Aorta (tissue), 5 donors: ENCODE measurements at regions of chr1 and their contacts with region 1.

Region 1: GRCh38 chr1:36149237-36149972 is at the start of gene TRAPPC3:
- DNase-seq: peak; percentile 100
- ATAC-seq: peak; percentile 96
- H3K4me3 ChIP-seq: peak within 1 kb of the TSS; percentile 23 to 48
- H3K27ac ChIP-seq: peak within 1 kb of the TSS; percentile 80 to 99
- H3K4me1 ChIP-seq: no peaks in the 10 kb centered on the region
- H3K27me3 ChIP-seq: no peaks in the 10 kb centered on the region
- total RNA-seq, gene TRAPPC3: 55.6 to 61.7 TPM

Region 2: DNA sequence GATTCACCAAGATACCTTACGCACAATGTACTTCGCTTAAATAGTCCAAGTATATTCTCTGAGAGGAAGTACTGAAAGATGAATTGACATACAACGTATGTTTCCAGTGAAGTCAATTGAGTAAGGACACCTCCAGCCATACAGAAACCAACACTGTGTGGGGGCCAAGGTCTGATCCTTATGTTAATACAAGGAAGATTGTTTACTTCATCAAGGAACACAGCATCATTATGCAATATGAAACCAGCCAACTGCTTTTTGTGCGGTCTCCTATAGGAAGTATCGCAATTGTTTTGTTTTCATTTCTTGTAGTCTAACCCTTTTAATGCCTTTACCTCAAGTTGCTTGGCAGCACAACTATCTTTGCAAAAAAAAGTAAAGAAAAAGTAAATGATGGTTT is 93.7 kb before region 1 on chr1:
- intact Hi-C with region 1: no loop called
- DNase-seq: no peak
- ATAC-seq: no peak
- H3K4me3 ChIP-seq: no peak overlapping the region
- H3K27ac ChIP-seq: no peak overlapping the region
- H3K4me1 ChIP-seq: no peaks in the 10 kb centered on the region
- H3K27me3 ChIP-seq: no peaks in the 10 kb centered on the region

Region 3: GRCh38 chr1:36187800-36188593 is 38.6 kb after region 1 on chr1:
- intact Hi-C with region 1: loop called (anchors 1 to 5 kb)
- DNase-seq: peak; percentile 91 to 92
- ATAC-seq: peak; percentile 95
- H3K4me3 ChIP-seq: no peak overlapping the region
- H3K27ac ChIP-seq: peak overlapping the region in 1 of 2 donors; percentile 87
- H3K4me1 ChIP-seq: no peaks in the 10 kb centered on the region
- H3K27me3 ChIP-seq: no peaks in the 10 kb centered on the region

Region 4: GRCh38 chr1:36223993-36224536 is 74.7 kb after region 1 on chr1 and contains the start of gene THRAP3:
- intact Hi-C with region 1: loop called in 1 of 2 experiments (anchors 2 kb)
- DNase-seq: peak; percentile 100
- ATAC-seq: peak; percentile 99
- H3K4me3 ChIP-seq: peak within 1 kb of the TSS; percentile 63 to 69
- H3K27ac ChIP-seq: peak within 1 kb of the TSS; percentile 64 to 90
- H3K4me1 ChIP-seq: peaks cover 0 to 2% of the 10 kb centered on the region in 2 donors
- H3K27me3 ChIP-seq: no peaks in the 10 kb centered on the region
- total RNA-seq, gene THRAP3: 85.3 to 91.5 TPM

Region 5: GRCh38 chr1:36248250-36248894 is 99.0 kb after region 1 on chr1:
- intact Hi-C with region 1: no loop called
- DNase-seq: peak; percentile 81 to 82
- ATAC-seq: peak; percentile 91
- H3K4me3 ChIP-seq: no peak overlapping the region
- H3K27ac ChIP-seq: peak overlapping the region; percentile 70 to 76
- H3K4me1 ChIP-seq: peaks cover 0 to 8% of the 10 kb centered on the region in 2 donors
- H3K27me3 ChIP-seq: no peaks in the 10 kb centered on the region

Region 6: DNA sequence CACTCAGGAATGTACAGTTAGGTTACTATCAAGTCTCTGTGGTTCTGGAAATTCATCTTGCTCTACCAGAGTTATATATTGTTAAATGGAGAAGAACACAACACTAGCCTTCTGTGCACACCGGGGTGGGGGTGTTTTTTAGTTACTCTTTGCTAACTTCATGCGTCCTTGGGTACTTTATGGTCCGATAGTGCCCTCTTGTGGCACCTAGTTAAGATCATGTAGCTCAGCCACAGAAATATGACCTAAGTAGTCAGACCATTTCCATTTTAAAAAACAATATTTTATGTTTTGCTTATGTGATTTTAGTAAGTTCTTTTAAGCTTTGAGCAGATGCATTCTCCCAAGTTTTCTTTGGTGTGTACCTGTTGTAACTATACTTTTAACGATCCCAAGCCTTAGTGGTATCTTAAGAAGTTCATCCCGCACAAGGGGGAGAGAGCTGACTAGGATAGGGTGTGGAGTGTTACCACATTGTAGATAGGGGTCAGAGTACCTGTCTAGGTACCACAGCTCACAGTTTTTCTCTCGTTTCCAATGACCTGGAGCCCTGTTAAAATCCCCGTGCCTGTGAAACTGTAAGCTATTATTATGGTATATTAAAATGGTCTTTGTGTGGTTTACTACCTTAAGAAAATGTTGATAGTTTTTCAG is 136.2 kb after region 1 on chr1:
- intact Hi-C with region 1: loop called (anchors 2 to 5 kb)
- DNase-seq: peak in 1 of 2 donors; percentile 59
- ATAC-seq: peak; percentile 88
- H3K4me3 ChIP-seq: no peak overlapping the region
- H3K27ac ChIP-seq: no peak overlapping the region
- H3K4me1 ChIP-seq: no peaks in the 10 kb centered on the region
- H3K27me3 ChIP-seq: no peaks in the 10 kb centered on the region

Region 7: DNA sequence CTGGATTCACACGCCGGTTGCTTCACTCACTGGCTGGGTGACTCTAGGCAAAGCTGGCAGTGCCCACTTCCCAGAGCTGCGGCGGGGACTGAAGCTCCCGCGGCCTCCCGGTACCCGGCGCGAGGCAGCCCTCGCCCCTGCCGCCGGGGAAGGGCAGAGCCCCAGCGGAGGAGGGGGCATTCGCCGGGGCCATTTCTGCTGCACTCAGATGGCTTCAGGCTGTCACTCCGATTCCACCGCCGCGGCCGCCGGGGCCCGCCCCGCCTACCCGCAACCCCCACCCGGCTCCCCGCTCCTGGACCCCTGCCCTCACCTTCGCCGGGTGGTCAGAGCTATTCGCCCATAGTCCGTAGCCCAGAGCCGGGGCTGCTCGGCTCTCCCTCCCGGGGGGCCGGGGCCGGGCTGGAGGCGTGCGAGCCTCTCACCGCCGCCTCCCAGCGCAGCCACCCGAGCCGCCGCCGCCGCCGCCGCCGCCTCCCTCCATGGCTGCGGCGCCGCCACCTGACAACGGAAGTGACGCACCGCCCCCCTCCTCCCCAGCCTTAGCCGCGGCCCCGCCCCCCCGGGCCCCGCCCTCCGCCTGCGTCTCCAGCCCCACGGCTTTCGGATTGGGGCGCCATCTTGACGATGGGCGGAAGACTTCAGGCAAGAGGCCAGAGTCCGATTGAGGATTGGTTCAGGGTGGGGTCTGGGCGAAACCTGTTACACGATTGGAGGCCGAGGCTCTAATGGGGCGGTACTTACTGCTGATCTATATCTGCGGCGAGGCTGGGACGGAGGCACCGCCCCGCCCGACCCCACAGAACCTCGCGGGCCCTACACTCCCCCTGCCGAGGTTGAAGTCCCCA is 236.2 kb after region 1 on chr1 and contains the start of gene STK40:
- intact Hi-C with region 1: loop called in 1 of 2 experiments (anchors 10 kb)
- DNase-seq: peak; percentile 99
- ATAC-seq: peak; percentile 94
- H3K4me3 ChIP-seq: peak within 1 kb of the TSS; percentile 81 to 92
- H3K27ac ChIP-seq: peak within 1 kb of the TSS; percentile 83 to 97
- H3K4me1 ChIP-seq: peaks cover 2 to 11% of the 10 kb centered on the region in 2 donors
- H3K27me3 ChIP-seq: no peaks in the 10 kb centered on the region
- total RNA-seq, gene STK40: 63.9 to 95.7 TPM